ENCODE measurements at regions of chr1 and their contacts with region 1.

Region 1: DNA sequence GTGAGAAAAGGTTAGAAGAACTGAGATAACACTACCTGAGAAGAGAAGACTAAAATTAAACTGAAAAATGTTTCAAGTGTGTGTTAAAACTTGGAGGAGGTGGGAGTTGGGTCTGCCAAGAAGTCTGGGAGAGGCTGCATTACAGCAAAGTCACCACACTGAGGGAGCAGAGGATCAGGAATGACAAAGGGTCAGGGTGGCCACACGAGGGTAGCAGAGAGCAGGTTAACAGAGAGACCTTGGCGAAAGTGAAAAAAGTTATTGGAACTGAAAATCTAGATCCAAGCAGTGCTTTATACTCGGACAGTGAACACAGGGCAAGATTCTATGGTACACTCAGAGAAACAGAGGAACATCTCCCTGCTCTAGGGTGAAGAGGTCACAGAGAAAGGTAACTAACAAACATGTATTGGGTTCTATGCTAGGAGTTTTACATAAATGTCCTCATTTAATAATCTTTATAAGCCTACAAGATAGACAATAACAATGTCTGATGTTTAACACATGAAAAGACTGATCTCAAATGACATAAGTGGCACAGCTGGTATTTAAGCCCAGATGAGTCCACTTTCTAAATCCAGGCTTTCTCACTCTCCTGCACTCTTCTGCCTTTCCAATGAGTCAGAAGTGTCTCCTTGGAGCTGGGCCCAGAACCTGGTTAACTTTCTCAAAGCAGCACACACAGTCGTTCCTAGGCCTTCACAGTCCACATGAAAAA is 10.3 kb upstream of the CADM3 start:
- DNase-seq: peak; percentile 86
- H3K4me3 Mint-ChIP-seq: no peak overlapping the region
- H3K27ac Mint-ChIP-seq: no peak overlapping the region
- H3K4me1 Mint-ChIP-seq: no peaks in the 10 kb centered on the region
- H3K27me3 Mint-ChIP-seq: peaks cover 53% of the 10 kb centered on the region
- CTCF ChIP-seq: peak; percentile 98

Region 2: DNA sequence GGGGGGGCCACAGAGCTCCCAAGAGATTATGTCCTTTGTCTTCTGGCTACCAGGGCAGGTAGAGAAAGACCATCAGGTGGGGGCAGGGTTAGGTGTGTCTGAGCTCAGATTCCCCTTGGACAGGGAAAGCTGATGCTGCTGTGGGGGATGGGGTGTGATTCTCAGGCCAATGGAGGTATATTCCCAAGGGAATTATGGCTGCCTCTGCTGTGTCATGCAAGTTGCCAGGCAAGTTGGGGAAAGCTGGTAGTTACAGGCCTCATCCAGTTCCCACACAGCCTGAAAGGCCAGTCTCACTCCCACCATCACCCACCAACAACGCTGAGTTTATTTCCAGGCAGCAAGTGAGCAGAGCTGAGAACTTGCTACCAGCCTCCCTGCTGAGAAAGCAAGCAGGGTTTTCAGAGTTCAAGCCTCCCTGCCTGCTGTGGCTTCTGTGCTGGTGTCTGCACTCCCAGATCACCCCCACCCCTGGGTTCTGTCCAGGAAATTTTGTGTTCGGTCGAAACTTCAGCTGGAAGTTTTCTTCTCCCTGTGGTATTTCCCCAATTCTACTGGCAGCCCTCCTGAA is 130.2 kb before region 1 on chr1:
- CTCF ChIA-PET with region 1: no interaction called
- intact Hi-C with region 1: no loop called
- DNase-seq: no peak
- H3K4me3 Mint-ChIP-seq: no peak overlapping the region
- H3K27ac Mint-ChIP-seq: no peak overlapping the region
- H3K4me1 Mint-ChIP-seq: no peaks in the 10 kb centered on the region
- H3K27me3 Mint-ChIP-seq: no peaks in the 10 kb centered on the region
- CTCF ChIP-seq: no peak

Region 3: DNA sequence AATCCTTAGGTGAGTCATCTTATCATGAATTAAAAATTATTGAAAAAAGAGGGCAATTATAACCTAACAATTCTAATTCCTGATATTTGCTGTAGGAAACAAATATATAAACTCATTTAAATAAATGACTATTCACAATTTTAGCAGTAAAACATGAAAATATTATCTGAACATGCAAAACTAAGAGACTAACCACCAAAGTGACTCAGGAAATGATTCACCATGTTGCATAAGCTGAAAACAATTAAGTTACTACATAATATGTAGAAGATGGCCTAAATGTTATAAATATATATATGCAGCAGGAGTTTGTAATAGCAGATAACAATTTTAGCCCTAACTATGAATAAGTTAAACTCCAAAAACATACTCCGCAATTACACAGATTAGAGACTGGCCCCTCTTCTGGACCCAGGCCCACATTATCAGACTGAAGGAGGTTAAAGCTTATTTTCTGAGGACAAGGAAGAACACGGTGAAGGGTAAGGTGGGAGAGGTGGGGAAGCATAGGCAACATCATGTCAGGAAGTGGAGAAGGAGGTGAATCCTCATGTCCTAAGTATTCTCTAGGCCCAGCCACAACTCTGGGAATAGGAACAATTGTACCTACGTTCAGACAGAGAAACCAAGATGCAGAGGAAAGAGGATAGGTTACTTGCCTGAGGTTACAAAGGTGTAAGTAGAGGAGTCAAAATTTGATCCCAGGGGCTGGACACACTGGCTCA is 69.0 kb before region 1 on chr1:
- CTCF ChIA-PET with region 1: no interaction called
- intact Hi-C with region 1: no loop called
- DNase-seq: no peak
- H3K4me3 Mint-ChIP-seq: no peak overlapping the region
- H3K27ac Mint-ChIP-seq: no peak overlapping the region
- H3K4me1 Mint-ChIP-seq: no peaks in the 10 kb centered on the region
- H3K27me3 Mint-ChIP-seq: peaks cover 7% of the 10 kb centered on the region
- CTCF ChIP-seq: no peak

Region 4: DNA sequence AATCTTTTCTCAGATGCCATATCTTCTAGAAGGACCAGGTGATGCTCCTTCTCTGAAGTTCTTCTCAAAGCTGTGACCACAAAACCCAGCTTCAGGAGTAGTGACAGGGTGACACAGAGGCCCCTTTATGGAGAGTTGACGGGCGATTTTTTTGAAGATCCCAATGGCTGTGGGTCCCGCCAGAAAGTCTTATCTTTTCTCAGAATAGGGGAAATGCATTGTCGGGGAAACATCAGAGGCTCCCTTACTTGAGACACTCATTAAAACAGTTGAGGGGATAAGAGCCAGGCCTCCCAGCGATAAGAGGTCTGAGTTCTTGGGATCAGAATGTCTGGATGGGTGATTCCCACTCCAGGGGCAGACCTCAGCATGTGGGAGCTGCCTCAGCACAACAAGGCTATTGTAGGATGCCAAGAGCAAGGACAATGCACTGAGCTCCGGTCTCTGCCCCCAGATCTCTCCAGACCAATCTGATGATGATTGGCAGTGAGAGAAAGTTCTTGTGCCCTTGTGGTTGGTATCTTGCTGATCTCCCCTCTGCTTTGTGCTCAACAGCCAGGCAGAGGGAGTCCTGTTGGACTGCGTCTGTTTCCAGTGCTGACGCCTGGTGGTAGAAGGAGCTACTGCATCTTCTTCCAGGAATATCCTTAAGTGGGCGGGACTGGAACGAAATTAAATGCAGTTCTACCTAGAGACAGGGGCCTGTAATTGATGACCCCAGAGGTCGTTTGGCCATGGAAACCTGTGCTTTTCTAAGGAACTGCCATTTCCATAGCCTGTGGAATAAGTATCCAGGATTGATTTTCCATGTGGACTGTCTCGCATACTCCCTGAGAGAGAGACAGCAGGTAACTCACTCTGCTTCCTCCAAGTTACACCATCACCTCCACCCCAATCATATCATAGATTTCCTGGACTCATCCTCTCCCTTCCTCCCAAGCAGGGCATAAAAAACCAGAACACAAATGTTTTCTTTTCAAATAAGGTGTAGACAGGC is 36.7 kb after region 1 on chr1:
- CTCF ChIA-PET with region 1: interaction called, 6 read pairs
- intact Hi-C with region 1: loop called (anchors 1 kb)
- DNase-seq: peak; percentile 82
- H3K4me3 Mint-ChIP-seq: no peak overlapping the region
- H3K27ac Mint-ChIP-seq: no peak overlapping the region
- H3K4me1 Mint-ChIP-seq: no peaks in the 10 kb centered on the region
- H3K27me3 Mint-ChIP-seq: peaks cover 93% of the 10 kb centered on the region
- CTCF ChIP-seq: peak; percentile 84

Region 5: GRCh38 chr1:159223004-159223403 is 61.8 kb after region 1 on chr1:
- CTCF ChIA-PET with region 1: no interaction called
- intact Hi-C with region 1: no loop called
- DNase-seq: no peak
- H3K4me3 Mint-ChIP-seq: no peak overlapping the region
- H3K27ac Mint-ChIP-seq: no peak overlapping the region
- H3K4me1 Mint-ChIP-seq: no peaks in the 10 kb centered on the region
- H3K27me3 Mint-ChIP-seq: peaks cover 17% of the 10 kb centered on the region
- CTCF ChIP-seq: no peak

Region 6: GRCh38 chr1:159790237-159790917 is 629.2 kb after region 1 on chr1:
- CTCF ChIA-PET with region 1: no interaction called
- intact Hi-C with region 1: loop called (anchors 2 kb)
- DNase-seq: peak; percentile 43
- H3K4me3 Mint-ChIP-seq: no peak overlapping the region
- H3K27ac Mint-ChIP-seq: no peak overlapping the region
- H3K4me1 Mint-ChIP-seq: peaks cover 13% of the 10 kb centered on the region
- H3K27me3 Mint-ChIP-seq: peaks cover 14% of the 10 kb centered on the region
- CTCF ChIP-seq: peak; percentile 57

Measured in Calu3 (cell line).